ENCODE measurements at regions of chr13 and their contacts with region 1.

Region 1: DNA sequence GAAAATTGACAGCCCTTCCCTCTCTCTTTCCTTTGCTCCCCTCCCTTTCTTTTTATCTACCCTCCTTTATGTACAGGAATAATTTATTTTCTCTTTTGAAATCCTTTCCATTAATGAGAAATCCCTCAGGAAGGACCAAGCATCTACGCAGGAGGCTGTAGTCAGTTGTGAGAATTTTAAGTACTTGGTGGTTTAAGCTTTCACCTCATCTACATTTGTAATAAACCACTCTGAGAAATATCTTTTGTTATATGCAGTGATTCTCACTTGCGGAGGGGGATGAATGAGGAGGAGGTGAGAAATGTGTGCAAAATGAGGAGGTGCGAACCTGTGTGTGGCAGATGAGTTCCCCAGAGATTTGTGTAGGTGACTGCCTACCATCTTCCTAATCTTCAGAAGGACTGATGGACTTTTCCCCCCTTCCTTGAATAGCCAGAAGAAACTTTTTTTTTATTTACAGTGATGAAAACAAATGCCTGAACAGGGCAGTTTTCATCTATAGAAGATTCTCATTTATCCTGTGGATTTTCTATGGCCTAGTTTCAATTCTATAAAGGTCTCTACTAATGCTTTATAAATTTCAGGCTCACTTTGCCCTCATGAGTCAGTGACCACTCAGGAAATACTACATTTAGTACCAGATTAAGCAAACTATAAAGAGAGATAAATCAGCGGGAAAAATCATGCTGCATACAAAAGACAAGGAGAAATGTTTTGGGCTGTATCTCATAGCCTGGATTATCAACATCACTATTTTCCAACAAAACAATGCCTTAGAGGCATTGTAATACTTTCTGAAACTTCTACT is 118.3 kb downstream of the LHFPL6 start:
- DNase-seq: no peak
- H3K4me3 ChIP-seq: no peak overlapping the region
- H3K4me3 Mint-ChIP-seq: no peak overlapping the region
- H3K27ac ChIP-seq: no peak overlapping the region
- H3K27ac Mint-ChIP-seq: no peak overlapping the region
- H3K4me1 ChIP-seq: no peaks in the 10 kb centered on the region
- H3K4me1 Mint-ChIP-seq: no peaks in the 10 kb centered on the region
- H3K27me3 ChIP-seq: no peaks in the 10 kb centered on the region
- H3K27me3 Mint-ChIP-seq: peaks cover 0 to 2% (median 0%) of the 10 kb centered on the region in 3 donors
- CTCF ChIP-seq: no peak

Region 2: GRCh38 chr13:39379118-39379517 is 105.6 kb before region 1 on chr13:
- intact Hi-C with region 1: loop called in 1 of 2 experiments (anchors 10 kb)
- DNase-seq: no peak
- H3K4me3 ChIP-seq: no peak overlapping the region
- H3K4me3 Mint-ChIP-seq: no peak overlapping the region
- H3K27ac ChIP-seq: no peak overlapping the region
- H3K27ac Mint-ChIP-seq: no peak overlapping the region
- H3K4me1 ChIP-seq: no peaks in the 10 kb centered on the region
- H3K4me1 Mint-ChIP-seq: no peaks in the 10 kb centered on the region
- H3K27me3 ChIP-seq: no peaks in the 10 kb centered on the region
- H3K27me3 Mint-ChIP-seq: peaks cover 0 to 5% (median 2%) of the 10 kb centered on the region in 3 donors
- CTCF ChIP-seq: no peak

Region 3: DNA sequence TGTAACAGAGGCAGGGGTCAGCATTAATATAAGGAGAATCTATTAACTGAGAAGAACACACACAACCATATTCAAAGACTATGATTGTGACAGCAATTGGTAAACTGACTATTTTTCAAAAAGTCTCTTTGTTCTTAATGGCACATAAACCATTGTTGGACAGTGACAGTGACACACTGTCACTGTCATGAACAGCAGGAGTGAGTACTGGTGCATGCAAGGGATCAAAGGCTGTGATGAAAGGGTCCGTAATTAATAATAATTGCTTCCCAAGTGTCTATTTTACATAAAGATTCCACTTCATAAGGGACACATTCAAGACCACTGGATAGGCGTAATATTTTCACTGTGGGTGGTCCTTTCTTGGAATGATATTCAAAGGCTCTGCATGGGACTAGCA is 67.5 kb after region 1 on chr13:
- intact Hi-C with region 1: no loop called
- DNase-seq: no peak
- H3K4me3 ChIP-seq: no peak overlapping the region
- H3K4me3 Mint-ChIP-seq: no peak overlapping the region
- H3K27ac ChIP-seq: no peak overlapping the region
- H3K27ac Mint-ChIP-seq: no peak overlapping the region
- H3K4me1 ChIP-seq: no peaks in the 10 kb centered on the region
- H3K4me1 Mint-ChIP-seq: peaks cover 3% of the 10 kb centered on the region
- H3K27me3 ChIP-seq: no peaks in the 10 kb centered on the region
- H3K27me3 Mint-ChIP-seq: peaks cover 0 to 1% (median 0%) of the 10 kb centered on the region in 3 donors
- CTCF ChIP-seq: no peak

Region 4: DNA sequence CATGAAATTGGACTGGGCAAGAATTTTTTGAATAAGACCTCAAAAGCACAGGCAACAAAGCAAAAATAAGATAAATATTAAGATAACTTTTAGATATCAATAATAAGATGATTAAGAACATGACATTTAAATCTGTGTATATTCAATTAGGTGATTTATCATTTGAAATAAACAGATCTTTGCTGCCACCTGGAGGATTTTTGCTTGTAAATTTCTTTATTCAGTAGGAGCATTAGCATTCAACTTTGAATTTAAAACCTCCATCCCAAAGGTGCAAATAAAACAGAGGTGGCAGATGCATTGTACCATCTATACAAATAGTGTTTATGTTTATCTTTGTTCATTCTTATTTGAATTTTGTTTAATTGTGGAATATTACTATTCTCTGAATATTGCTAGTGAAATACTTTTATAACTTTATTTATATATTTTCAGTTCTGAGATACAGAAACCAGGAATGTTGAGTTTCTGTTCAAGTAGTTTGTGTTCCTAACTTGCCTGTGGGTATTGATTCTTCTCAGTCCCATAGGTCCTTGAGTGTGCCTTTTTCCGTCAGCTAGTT is 191.7 kb after region 1 on chr13:
- intact Hi-C with region 1: no loop called
- DNase-seq: peak in 2 of 3 donors; percentile 21 to 45
- H3K4me3 ChIP-seq: no peak overlapping the region
- H3K4me3 Mint-ChIP-seq: no peak overlapping the region
- H3K27ac ChIP-seq: no peak overlapping the region
- H3K27ac Mint-ChIP-seq: no peak overlapping the region
- H3K4me1 ChIP-seq: no peaks in the 10 kb centered on the region
- H3K4me1 Mint-ChIP-seq: no peaks in the 10 kb centered on the region
- H3K27me3 ChIP-seq: no peaks in the 10 kb centered on the region
- H3K27me3 Mint-ChIP-seq: no peaks in the 10 kb centered on the region
- CTCF ChIP-seq: peak; percentile 65